Activated B cell treated with CpG ODN at 0.5 μM for 24 hours (primary cell): ENCODE measurements at regions of chr1 and their contacts with region 1.

Region 1: DNA sequence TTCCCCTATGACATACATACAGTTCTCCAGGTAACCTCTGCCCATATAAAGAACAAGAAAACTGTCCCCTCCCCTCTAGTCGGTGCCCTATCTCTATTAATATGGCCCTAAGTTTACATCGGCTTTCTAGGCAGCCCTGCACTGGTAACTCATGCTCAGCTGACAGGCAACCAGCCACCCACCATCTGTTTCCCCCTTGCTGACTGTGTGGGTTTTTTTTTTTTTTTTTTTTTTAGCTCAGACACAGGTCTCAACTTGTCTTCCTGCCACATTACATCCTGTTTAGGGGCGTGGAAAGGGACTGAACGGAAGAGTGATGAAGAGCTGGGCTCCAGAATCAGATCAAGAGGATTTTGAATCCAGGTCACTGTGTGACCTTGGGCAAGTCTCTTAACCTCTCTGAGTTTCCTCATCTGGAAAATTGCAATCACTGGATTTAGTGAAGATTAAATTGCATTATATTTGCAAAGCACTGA is 14.0 kb downstream of the LAPTM5 start:
- DNase-seq: no peak
- ATAC-seq: peak; percentile 72
- H3K4me3 Mint-ChIP-seq: peak overlapping the region; percentile 72
- H3K27ac Mint-ChIP-seq: peak overlapping the region; percentile 96
- H3K4me1 Mint-ChIP-seq: peaks cover 99% of the 10 kb centered on the region
- H3K27me3 Mint-ChIP-seq: no peaks in the 10 kb centered on the region
- CTCF ChIP-seq: no peak

Region 2: DNA sequence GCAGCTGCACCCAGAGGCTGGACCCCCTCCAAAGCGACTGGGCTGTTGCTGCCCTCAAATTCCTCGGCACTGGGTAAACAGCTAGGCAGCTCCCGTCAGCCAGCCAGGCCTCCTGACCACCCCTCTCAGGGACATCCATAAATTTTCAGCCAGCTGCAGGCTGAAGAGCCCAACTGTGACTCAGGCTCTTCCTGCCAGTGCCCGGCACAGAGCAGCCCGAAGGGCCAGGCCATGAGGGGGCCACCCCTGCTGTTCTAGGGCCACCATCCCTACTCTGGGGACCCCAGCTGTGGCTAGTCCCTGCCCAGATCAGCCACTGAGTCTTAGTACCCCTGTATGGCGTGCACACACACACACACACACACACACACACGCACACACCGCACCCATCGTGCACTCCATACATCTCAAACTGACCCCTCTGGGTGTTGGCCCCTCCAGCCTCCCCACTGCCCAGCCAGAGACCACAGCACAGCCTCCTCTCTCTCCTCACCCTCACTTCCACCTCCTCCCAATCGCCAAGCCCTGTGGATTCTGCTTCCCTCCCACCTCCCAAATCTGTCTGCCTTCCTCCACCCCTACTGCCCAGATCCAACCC is 20.1 kb after region 1 on chr1:
- CTCF ChIA-PET with region 1: interaction called, 8 read pairs
- POLR2A ChIA-PET with region 1: interaction called, 662 read pairs
- intact Hi-C with region 1: no loop called
- DNase-seq: no peak
- ATAC-seq: no peak
- H3K4me3 Mint-ChIP-seq: no peak overlapping the region
- H3K27ac Mint-ChIP-seq: peak overlapping the region; percentile 80
- H3K4me1 Mint-ChIP-seq: peaks cover 76% of the 10 kb centered on the region
- H3K27me3 Mint-ChIP-seq: no peaks in the 10 kb centered on the region
- CTCF ChIP-seq: no peak

Region 3: GRCh38 chr1:30790850-30791778 is 47.5 kb after region 1 on chr1:
- CTCF ChIA-PET with region 1: no interaction called
- POLR2A ChIA-PET with region 1: interaction called, 13 read pairs
- intact Hi-C with region 1: no loop called
- DNase-seq: no peak
- ATAC-seq: peak; percentile 82
- H3K4me3 Mint-ChIP-seq: peak overlapping the region; percentile 58
- H3K27ac Mint-ChIP-seq: peak overlapping the region; percentile 72
- H3K4me1 Mint-ChIP-seq: peaks cover 31% of the 10 kb centered on the region
- H3K27me3 Mint-ChIP-seq: peaks cover 12% of the 10 kb centered on the region
- CTCF ChIP-seq: no peak

Region 4: DNA sequence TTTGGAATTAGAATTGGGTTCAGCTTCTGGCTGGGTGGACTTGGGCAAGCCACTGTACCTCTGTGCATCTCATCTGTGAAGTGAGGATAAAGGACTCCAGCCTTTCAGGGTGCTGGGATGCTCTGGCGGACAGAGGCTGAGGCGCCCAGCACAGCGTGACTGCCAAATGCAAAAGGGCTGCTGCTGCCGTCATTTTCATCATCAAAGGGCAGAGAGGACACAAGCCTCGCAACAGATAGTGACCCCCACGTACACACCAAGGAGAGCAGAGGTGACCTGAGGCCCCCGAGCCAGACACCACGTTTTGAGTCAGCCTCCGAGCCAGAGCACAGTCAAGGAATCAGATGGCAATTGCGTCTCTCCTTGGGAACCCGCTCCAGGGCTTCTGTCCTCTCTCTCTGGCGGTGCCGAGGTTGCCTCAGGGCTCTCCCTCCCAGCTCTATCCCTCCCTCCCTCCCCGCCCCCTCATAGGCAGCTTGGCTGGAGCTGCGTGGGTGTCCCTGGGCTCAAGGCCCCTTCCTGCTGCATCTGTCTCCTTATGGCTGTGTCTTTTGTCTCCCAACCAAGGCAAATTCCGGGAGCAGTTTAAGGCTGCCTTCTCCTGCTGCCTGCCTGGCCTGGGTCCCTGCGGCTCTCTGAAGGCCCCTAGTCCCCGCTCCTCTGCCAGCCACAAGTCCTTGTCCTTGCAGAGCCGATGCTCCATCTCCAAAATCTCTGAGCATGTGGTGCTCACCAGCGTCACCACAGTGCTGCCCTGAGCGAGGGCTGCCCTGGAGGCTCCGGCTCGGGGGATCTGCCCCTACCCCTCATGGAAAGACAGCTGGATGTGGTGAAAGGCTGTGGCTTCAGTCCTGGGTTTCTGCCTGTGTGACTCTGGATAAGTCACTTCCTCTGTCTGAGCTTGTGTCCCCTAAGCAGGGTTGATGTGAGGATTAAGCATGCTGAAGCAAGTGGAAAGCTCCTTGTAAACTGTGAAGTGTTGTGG is 882.9 kb after region 1 on chr1:
- CTCF ChIA-PET with region 1: no interaction called
- POLR2A ChIA-PET with region 1: no interaction called
- intact Hi-C with region 1: no loop called
- DNase-seq: no peak
- ATAC-seq: no peak
- H3K4me3 Mint-ChIP-seq: no peak overlapping the region
- H3K27ac Mint-ChIP-seq: no peak overlapping the region
- H3K4me1 Mint-ChIP-seq: peaks cover 10% of the 10 kb centered on the region
- H3K27me3 Mint-ChIP-seq: no peaks in the 10 kb centered on the region
- CTCF ChIP-seq: no peak